B cell (primary cell): ENCODE measurements at regions of chr5 and their contacts with region 1.

Region 1: DNA sequence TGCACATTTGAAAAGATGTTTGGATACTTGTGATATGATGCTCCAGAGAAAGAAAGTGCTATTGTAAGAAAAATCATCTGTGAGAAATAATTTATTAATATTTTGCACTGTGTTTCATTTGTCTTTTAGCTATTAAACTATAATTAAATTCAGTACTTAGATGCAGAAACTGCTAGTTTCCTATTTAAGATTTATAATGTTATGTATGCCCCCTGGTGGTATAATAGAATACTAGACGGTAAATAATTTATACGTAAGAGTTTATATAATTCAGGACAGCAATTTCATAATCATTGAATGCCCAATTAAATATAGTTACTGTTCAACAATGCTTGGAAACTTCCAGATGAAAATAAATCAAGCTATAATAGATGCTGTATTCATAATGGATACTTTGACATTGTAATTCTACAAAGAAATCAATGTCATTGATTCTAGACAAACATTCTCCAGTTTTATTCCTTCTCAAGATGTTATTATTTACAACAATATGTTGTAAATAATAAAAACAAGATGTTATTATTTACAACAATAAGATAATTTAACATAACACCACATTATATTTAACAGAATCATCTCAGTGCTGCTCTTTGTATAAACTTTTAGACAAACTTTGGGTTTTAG is 101.0 kb downstream of the TMEM232 start:
- DNase-seq: peak; percentile 20
- ATAC-seq: no peak
- H3K4me3 ChIP-seq: no peak overlapping the region
- H3K4me3 Mint-ChIP-seq: no peak overlapping the region
- H3K27ac ChIP-seq: no peak overlapping the region
- H3K27ac Mint-ChIP-seq: no peak overlapping the region
- H3K4me1 ChIP-seq: no peaks in the 10 kb centered on the region
- H3K4me1 Mint-ChIP-seq: no peaks in the 10 kb centered on the region
- H3K27me3 ChIP-seq: no peaks in the 10 kb centered on the region
- H3K27me3 Mint-ChIP-seq: no peaks in the 10 kb centered on the region
- CTCF ChIP-seq: peak; percentile 83

Region 2: GRCh38 chr5:108919591-108920326 is 1705.7 kb before region 1 on chr5:
- CTCF ChIA-PET with region 1: interaction called, 3 read pairs
- POLR2A ChIA-PET with region 1: no interaction called
- intact Hi-C with region 1: loop called (anchors 10 kb)
- DNase-seq: no peak
- ATAC-seq: no peak
- H3K4me3 ChIP-seq: no peak overlapping the region
- H3K4me3 Mint-ChIP-seq: no peak overlapping the region
- H3K27ac ChIP-seq: no peak overlapping the region
- H3K27ac Mint-ChIP-seq: no peak overlapping the region
- H3K4me1 ChIP-seq: no peaks in the 10 kb centered on the region
- H3K4me1 Mint-ChIP-seq: no peaks in the 10 kb centered on the region
- H3K27me3 ChIP-seq: no peaks in the 10 kb centered on the region
- H3K27me3 Mint-ChIP-seq: no peaks in the 10 kb centered on the region
- CTCF ChIP-seq: peak; percentile 36

Region 3: DNA sequence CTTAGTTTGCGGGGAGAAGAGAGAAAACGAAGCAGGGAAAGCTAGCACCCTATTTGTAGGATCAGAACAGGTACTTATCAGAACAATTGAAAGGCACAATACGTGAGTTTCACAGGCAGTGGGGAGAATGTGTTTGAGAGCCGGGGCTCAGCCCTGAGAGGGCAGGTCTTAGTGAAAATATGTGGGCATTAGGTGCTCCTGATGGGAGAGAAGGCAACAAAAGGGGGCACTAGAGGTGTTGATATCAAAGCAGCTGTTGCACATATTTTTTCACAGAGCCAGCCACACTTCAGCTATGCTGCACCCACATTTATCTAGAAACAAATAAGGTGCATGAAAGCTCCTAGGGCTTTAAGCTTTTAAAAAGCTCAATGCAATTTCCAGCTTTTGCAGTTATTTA is 1035.5 kb before region 1 on chr5:
- CTCF ChIA-PET with region 1: interaction called, 3 read pairs
- POLR2A ChIA-PET with region 1: no interaction called
- intact Hi-C with region 1: loop called (anchors 10 kb)
- DNase-seq: peak; percentile 5
- ATAC-seq: no peak
- H3K4me3 ChIP-seq: no peak overlapping the region
- H3K4me3 Mint-ChIP-seq: no peak overlapping the region
- H3K27ac ChIP-seq: no peak overlapping the region
- H3K27ac Mint-ChIP-seq: no peak overlapping the region
- H3K4me1 ChIP-seq: no peaks in the 10 kb centered on the region
- H3K4me1 Mint-ChIP-seq: no peaks in the 10 kb centered on the region
- H3K27me3 ChIP-seq: no peaks in the 10 kb centered on the region
- H3K27me3 Mint-ChIP-seq: peaks cover 3% of the 10 kb centered on the region
- CTCF ChIP-seq: no peak

Region 4: DNA sequence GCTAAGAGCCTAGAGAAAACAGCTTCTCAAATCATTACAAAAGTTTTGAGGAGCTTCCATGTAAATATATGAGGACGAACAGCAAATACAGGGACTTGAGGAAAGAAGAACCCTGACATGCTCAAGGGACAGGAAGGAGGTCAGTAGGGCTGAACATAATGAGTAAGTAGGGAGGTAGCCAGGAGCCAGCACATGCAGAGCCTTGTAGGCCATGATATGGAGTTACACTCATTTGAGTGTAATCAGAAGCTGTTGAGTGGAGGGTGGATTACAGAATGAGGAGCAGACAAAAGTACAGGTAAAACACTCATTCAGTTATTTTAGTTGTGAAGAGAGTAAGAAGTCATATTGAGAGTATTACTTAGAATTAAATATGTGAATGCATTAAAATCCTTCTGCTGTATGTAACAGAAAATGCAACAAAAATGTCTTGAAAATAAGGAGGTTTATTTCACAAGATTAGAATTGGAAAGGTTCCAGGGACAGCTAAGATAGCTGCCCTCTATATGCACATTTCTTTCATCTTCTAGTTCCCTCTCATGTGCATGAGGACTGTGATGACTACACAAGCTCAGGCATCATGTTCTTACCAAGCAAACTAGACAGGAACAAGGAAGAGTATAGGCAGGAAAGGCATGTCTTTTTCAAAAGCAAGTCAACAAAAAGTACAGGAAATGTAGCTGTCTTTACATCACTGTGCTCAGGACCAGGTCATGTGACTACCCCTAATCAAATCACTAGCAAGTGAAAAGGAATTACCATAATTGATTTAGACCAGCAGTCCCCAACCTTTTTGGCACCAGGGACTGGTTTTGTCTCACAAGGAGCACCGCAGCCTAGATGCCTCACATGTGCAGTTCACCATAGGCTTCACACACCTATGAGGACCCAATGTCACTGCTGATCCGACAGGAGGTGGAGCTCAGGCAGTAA is 13.7 kb after region 1 on chr5:
- CTCF ChIA-PET with region 1: interaction called, 11 read pairs
- POLR2A ChIA-PET with region 1: no interaction called
- intact Hi-C with region 1: no loop called
- DNase-seq: no peak
- ATAC-seq: no peak
- H3K4me3 ChIP-seq: no peak overlapping the region
- H3K4me3 Mint-ChIP-seq: no peak overlapping the region
- H3K27ac ChIP-seq: no peak overlapping the region
- H3K27ac Mint-ChIP-seq: no peak overlapping the region
- H3K4me1 ChIP-seq: no peaks in the 10 kb centered on the region
- H3K4me1 Mint-ChIP-seq: no peaks in the 10 kb centered on the region
- H3K27me3 ChIP-seq: no peaks in the 10 kb centered on the region
- H3K27me3 Mint-ChIP-seq: no peaks in the 10 kb centered on the region
- CTCF ChIP-seq: no peak